GM18951 (cell line): ENCODE measurements at regions of chr1 and their contacts with region 1.

Region 1: GRCh38 chr1:54474639-54475251 is 68.6 kb upstream of the SSBP3 start:
- POLR2A ChIP-seq: no peak

Region 2: DNA sequence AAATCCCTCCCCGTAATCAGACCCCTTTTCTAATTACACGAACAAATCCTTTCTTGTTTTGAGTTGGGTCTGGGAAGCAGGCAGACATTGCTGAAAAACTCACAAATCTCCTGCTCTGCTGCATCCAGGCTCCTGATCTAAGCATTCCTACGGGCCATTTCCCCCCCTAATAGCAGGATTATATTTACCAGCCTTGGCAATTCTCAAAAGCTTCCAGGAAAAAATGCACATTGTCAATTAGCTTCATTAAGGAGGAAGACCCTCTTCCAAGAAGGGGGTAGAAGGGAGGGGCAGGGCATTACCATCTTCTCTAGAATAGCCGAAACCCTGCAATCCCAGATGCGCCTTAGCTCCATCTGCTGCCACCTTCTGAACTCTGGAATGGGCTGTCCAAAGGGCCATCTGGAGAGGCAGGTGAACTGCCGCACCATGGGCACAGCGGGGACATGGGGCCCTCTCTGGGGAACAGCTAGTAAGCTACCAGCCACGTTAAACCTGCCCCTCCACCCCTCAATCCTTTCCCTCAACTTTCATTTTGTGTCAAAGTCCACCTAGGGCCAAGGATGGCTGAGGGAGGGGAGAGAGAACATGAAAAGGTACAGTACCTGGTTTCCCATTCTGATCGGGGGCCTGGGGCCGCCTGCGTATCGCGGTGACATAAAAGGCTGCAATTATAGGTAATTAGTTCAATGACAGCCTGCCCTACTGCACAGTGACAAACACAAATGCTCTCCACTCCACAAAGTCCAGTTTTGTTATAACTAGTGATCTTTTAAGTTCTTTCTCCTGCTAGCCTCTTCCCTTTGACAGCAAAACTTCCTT is 218.0 kb before region 1 on chr1:
- in situ Hi-C with region 1: no loop called
- POLR2A ChIP-seq: no peak

Region 3: GRCh38 chr1:54376430-54377039 is 98.2 kb before region 1 on chr1:
- in situ Hi-C with region 1: no loop called
- POLR2A ChIP-seq: no peak

Region 4: GRCh38 chr1:54413295-54413694 is 61.5 kb before region 1 on chr1:
- in situ Hi-C with region 1: loop called (anchors 10 kb)
- POLR2A ChIP-seq: no peak